Upper lobe of right lung (tissue), 1 donor: ENCODE measurements at regions of chr1 and their contacts with region 1.

Region 1: GRCh38 chr1:16958503-16958902 is 21.9 kb downstream of the MFAP2 start:
- DNase-seq: no peak
- ATAC-seq: no peak
- H3K4me3 ChIP-seq: no peak overlapping the region
- H3K27ac ChIP-seq: no peak overlapping the region
- H3K4me1 ChIP-seq: peaks cover 7% of the 10 kb centered on the region
- H3K27me3 ChIP-seq: no peaks in the 10 kb centered on the region
- CTCF ChIP-seq: no peak

Region 2: DNA sequence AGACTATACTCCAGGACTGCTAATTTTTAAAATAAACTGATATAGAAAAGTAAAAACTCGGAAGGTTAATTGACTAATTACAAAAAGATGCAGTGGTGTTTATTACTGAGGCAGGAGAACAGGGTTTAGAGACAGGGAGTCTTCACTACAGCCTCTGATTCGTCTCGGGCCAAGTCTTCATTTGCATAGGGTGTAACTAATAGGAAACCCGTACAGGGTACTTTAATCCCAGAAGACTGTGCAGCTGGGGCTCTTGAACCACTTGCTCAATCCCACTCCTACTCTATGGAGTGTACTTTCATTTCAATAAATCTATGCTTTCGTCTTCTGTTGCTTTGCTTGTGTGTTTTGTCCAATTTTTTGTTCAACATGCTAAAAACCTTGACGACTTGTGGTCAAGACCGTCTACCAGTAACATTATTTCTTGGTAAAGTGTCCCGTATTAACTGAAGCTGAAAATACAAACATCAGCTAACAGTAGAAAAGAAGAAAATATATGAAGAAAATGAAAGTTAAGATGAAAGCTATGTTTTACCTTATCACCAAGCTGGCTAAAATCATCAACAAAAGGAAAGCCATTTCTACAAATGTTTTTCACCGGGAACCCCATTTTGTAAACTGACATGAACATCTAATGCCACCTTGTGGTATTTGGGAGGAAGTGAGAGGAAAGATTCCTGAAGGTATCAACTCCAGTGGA is 87.3 kb after region 1 on chr1:
- intact Hi-C with region 1: loop called (anchors 10 kb)
- DNase-seq: no peak
- ATAC-seq: peak; percentile 74
- H3K4me3 ChIP-seq: peak overlapping the region; percentile 28
- H3K27ac ChIP-seq: no peak overlapping the region
- H3K4me1 ChIP-seq: peaks cover 15% of the 10 kb centered on the region
- H3K27me3 ChIP-seq: no peaks in the 10 kb centered on the region
- CTCF ChIP-seq: peak; percentile 83

Region 3: DNA sequence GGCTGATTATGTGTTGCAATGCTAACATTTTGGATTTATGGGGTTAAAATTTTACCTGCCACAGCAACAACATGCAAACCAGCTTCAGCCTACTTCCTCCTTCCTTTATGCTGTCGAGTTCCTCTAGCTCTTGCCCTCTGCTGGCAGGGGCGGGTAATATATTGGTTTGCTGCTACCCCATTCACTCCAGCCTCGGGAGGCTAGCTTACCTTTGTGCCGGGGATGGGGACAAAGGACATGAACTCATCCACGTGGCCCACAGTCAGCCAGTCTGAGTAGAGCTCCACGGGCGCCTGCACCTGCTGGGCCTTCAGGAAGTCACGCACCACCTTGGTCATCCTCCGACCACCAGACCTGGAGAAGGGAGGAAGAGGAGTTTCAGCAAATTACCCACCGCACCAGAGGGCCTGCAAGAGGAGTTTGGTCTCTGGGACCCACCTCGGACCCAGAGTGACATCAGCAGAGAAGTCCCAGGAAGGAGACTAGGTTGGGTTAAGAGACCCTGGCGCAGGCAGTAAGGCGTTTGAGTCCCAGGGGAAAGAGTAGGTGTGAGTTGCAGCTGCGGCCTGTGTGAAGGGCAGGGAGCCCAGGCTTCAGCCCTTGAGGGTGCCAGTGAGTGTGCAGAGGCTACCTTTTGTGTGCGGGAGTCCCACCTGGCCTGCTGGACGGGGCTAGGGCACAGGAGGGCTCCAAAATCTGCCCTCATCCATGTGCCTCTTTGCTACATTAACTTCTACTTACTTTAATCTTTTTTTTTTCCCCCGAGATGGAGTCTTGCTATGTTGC is 117.2 kb after region 1 on chr1:
- intact Hi-C with region 1: no loop called
- DNase-seq: no peak
- ATAC-seq: peak; percentile 81
- H3K4me3 ChIP-seq: no peak overlapping the region
- H3K27ac ChIP-seq: no peak overlapping the region
- H3K4me1 ChIP-seq: no peaks in the 10 kb centered on the region
- H3K27me3 ChIP-seq: no peaks in the 10 kb centered on the region
- CTCF ChIP-seq: peak; percentile 32